ENCODE measurements at regions of chr11 and their contacts with region 1.

Region 1: DNA sequence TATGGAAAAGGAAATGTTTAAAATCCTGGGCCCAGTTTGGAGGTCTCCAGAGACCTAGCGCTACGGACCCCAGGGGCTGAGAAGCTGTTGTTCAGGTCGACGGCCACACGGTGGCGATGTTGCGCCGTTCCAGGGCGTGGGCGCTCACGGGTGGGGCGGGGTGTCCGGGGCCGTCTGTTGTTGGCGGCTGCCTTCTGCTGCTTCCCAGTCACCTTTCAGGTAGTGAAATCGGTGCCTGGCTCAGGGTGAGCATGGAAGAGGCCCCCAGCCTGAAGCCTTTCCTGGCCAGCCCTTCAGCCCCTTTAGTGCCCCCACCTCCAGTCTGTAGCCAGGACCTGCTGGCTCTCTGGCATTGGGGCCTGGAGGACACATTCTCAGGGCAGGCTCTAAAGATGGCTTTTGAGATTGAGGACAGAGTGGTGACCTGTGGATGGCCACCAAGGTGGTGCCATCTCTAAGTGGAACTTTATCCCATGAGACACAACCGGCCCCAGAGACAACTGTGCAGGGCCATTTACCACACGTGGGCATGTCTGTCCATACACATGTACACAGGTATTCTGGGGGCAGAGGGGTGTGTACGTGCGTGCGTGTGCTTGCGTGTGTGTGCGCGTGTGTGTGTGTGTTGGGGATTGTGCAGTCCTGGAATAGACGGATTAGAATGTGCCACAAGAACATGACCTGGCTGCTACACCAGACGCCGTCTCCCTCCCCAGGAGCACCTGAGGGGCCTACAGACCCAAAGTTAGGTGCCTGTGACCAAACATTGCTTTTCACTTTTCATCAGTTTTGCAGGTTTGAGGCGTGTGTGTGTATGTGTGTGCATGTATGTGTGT is 53.8 kb downstream of the ST14 start:
- DNase-seq: peak; percentile 41 to 74
- ATAC-seq: peak; percentile 77 to 87 (median 82)
- H3K4me3 ChIP-seq: peak overlapping the region in 1 of 10 donors; percentile 9
- H3K27ac ChIP-seq: no peak overlapping the region
- H3K4me1 ChIP-seq: peaks cover 0 to 10% (median 5%) of the 10 kb centered on the region in 9 donors
- H3K27me3 ChIP-seq: peaks cover 0 to 8% (median 0%) of the 10 kb centered on the region in 7 donors
- CTCF ChIP-seq: peak; percentile 88 to 98 (median 97)

Region 2: DNA sequence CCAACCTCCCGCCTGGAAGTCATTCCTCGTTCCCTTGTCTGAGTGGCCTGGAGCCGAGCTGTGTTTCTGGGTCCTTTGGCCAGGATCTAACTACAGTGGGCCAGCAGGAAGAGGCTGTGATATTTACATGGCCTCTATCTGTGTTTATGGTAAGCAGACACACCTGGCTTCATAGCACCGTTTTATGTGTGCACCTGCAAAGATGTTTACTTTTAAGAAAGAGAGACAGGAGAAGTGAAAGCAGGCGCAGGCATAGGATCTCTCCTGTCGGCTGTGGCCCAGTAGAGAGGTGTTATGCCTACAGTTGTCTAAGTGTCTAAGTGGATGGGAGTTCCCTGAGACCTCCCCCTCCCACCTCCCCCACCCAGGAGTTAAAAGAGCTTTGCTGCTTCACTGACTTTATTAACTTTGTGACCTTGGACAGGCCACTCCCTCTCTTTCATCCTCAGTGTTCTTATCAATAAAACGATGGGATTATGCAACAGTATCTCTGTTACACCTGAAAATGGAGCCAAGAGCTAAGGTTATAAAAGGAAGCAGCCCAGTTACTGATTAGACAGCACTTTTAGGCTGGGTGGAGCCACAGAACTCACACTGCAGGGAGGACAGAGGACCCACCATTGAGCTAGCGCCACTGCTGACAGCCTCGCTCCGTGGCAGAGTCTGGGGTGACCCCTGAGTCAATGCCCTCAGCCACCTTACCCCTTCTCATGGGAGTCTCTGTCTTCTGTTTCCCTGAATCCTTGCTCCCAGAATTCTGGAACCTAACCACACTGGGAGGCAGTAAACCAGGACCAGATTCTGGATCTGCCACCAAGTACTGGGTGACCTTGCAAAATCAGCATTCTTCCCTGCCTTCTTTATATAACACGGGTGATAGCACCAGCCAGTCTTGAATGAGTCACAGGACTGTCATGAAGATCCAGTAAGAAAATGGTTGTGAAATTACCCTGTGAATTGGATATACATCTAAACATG is 31.8 kb before region 1 on chr11:
- intact Hi-C with region 1: no loop called
- DNase-seq: peak in 1 of 2 donors; percentile 23
- ATAC-seq: peak; percentile 56 to 86 (median 80)
- H3K4me3 ChIP-seq: no peak overlapping the region
- H3K27ac ChIP-seq: peak overlapping the region; percentile 67 to 86 (median 80)
- H3K4me1 ChIP-seq: peaks cover 20 to 51% (median 47%) of the 10 kb centered on the region in 9 donors
- H3K27me3 ChIP-seq: no peaks in the 10 kb centered on the region
- CTCF ChIP-seq: no peak

Region 3: GRCh38 chr11:130383344-130384211 is 170.2 kb after region 1 on chr11:
- intact Hi-C with region 1: loop called in 2 of 10 experiments (anchors 10 kb)
- DNase-seq: no peak
- ATAC-seq: peak in 4 of 8 donors; percentile 13 to 63 (median 28)
- H3K4me3 ChIP-seq: no peak overlapping the region
- H3K27ac ChIP-seq: no peak overlapping the region
- H3K4me1 ChIP-seq: peaks cover 0 to 5% (median 0%) of the 10 kb centered on the region in 9 donors
- H3K27me3 ChIP-seq: no peaks in the 10 kb centered on the region
- CTCF ChIP-seq: no peak

Region 4: DNA sequence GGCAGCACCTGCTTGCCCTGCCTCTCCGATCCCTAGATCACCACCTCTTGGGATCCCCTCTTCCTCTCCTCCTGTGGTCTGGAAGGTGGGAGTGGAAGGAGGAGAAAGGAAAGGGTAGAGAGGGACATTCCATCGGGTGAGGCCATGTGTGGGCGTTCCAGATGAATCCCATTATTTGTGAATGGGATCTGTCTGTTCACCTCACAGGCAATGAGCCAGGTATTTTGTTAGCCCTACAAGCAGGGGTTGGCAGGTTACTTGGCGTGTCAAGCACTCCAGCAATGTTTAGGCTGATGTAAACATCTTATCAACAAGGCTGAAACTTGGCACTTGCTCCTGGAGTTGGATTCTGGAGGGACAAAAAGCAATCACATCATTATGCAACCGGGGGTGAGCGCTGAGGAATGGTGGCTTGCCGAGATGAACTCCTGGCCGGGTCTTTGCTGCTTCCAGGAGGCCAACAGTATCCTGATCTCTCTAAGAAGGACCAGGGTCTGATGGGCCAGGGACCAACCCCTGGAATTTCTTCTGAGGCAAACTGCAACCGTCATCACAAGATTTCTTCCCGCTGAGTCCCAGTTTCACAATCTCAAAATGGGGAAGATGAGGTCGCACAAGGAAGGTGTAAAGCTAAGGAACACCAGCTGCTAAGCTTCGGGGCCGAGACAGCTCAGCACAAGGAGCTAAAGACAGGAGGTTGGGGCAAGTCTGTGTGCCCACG is 207.3 kb after region 1 on chr11:
- intact Hi-C with region 1: loop called in 4 of 10 experiments (anchors 5 to 10 kb)
- DNase-seq: no peak
- ATAC-seq: peak in 2 of 8 donors; percentile 5 to 43
- H3K4me3 ChIP-seq: no peak overlapping the region
- H3K27ac ChIP-seq: no peak overlapping the region
- H3K4me1 ChIP-seq: peaks cover 0 to 9% (median 5%) of the 10 kb centered on the region in 9 donors
- H3K27me3 ChIP-seq: peaks cover 0 to 13% (median 1%) of the 10 kb centered on the region in 7 donors
- CTCF ChIP-seq: no peak

Region 5: GRCh38 chr11:130434521-130435223 is 221.3 kb after region 1 on chr11:
- intact Hi-C with region 1: loop called in 7 of 10 experiments (anchors 2 to 10 kb)
- DNase-seq: peak; percentile 62 to 78
- ATAC-seq: peak; percentile 86 to 94 (median 89)
- H3K4me3 ChIP-seq: peak overlapping the region; percentile 11 to 70 (median 60)
- H3K27ac ChIP-seq: peak overlapping the region in 9 of 10 donors; percentile 3 to 85 (median 76)
- H3K4me1 ChIP-seq: peaks cover 0 to 14% (median 12%) of the 10 kb centered on the region in 9 donors
- H3K27me3 ChIP-seq: peaks cover 0 to 14% (median 9%) of the 10 kb centered on the region in 7 donors
- CTCF ChIP-seq: peak; percentile 67 to 83 (median 76)

Region 6: DNA sequence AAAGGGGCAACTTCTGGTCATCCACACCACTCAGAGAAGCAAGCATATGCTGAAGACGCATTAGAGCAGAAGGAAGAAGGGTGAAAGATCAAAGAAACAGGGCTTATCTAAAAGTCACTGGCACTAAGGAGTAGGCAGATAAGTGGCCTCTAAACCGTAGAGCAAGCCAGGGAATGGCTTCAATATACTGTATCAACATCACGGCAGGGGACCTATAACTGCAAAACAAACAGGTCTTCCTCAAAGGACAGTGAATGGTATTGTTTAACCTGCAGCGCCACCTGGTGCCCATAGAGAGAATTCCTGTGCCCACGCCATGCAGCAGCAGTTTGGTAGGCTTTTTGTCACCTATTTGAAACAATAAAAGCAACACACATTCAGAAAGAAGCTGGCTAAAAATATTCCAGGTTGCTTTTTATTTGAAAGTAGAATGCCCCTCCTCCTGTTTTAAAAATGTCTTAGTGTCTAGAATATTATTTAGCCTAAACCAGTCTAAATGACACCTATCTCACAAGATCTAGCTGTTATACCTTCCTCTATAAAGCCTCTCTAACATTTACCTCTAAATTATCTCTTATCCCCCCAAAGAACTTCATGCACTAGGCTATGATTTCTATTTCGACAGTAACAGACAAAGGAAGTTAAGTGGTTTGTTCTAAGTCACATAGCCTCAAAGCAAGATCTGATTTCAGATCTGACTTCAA is 681.1 kb after region 1 on chr11:
- intact Hi-C with region 1: loop called in 2 of 10 experiments (anchors 10 kb)
- DNase-seq: peak; percentile 53 to 72
- ATAC-seq: peak in 5 of 8 donors; percentile 42 to 48 (median 44)
- H3K4me3 ChIP-seq: no peak overlapping the region
- H3K27ac ChIP-seq: peak overlapping the region in 5 of 10 donors; percentile 6 to 89 (median 50)
- H3K4me1 ChIP-seq: peaks cover 0 to 63% (median 41%) of the 10 kb centered on the region in 9 donors
- H3K27me3 ChIP-seq: no peaks in the 10 kb centered on the region
- CTCF ChIP-seq: peak; percentile 75 to 93 (median 88)

Measured in heart right ventricle (tissue), 16 donors.